ENCODE measurements at regions of chr12 and their contacts with region 1.

Region 1: GRCh38 chr12:49288412-49288853 is 6.5 kb upstream of the PRPH start:
- DNase-seq: no peak
- ATAC-seq: peak in 1 of 2 donors; percentile 34

Region 2: DNA sequence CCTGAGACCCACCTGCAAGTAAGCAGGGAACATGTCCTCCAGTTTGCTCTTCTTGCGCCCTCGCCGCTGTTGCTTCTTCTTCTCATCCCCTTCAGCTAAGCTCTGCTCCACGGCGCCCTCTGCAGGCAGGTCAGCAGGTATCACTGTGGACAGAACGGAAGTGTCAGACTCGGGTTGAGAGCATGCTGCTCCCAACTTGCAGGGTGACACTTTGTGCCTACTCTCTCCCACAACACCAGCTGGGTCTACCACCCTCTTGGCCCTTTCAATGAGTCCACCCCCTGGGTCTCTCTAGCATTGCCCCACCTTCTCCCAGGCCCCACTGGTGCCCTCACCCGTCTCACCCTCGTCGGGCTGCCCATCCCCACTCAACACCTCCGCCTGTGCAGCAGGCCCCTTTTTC is 244.6 kb before region 1 on chr12:
- intact Hi-C with region 1: no loop called
- DNase-seq: peak; percentile 59
- ATAC-seq: peak in 1 of 2 donors; percentile 13

Region 3: DNA sequence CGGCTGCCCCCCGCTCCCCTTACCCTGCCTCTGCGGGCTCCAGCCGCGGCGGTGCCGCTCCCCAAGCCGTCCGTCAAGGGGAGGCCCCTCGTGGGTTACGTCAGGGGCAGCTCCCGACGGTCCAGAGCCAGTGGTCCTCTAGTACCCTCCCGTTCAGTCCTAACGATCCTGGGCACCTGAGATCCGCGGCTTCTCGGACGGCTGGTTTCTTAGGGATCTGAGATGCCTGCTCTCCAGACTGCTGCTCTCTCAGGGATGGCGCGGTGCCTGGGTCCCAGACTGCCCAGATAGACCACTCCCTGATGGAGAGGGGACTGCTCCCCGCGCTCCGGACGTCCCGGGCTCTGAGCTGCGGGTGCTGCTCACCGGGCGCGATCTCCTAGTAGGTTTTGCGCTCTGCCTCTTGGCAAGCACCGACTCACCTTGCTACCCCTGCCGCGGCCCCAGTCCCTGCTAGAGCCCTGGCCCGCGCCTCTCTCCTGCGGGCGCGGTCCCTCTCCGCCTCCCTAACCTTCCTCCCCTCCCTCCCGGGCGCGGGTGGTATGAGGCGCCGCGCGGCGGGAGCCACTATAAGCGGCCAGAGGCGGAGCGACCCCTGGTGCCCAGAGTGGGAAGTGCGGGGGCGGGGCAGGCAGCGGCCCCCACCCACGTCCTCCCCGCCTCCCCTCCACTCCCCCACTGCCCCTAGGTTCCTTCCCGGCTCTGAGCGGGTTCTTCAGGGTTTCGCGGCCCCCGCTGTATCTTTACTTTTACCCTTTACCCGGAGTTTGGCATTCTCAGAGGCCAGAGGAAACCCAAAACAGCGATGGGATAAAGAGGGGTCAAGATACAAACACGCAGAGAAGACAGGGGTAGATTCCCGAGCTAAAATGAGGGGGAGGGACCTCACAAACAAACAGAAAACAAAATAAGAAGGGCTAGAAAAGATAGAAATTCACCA is 48.5 kb after region 1 on chr12 and contains the start of gene C1QL4:
- intact Hi-C with region 1: loop called (anchors 5 to 10 kb)
- DNase-seq: peak; percentile 87
- ATAC-seq: peak; percentile 85 to 89
- total RNA-seq, gene C1QL4: not detected

Measured in left cardiac atrium (tissue), 4 donors.